ENCODE measurements at regions of chr1 and their contacts with region 1.

Region 1: GRCh38 chr1:39825432-39825951 is 36.8 kb upstream of the BMP8B start:
- ATAC-seq: no peak
- H3K4me3 ChIP-seq: no peak overlapping the region
- H3K27ac ChIP-seq: no peak overlapping the region
- H3K4me1 ChIP-seq: peaks cover 0 to 7% of the 10 kb centered on the region in 2 donors

Region 2: GRCh38 chr1:39898648-39899603 is 73.4 kb after region 1 on chr1:
- in situ Hi-C with region 1: loop called in 1 of 9 experiments (anchors 10 kb)
- ATAC-seq: peak in 6 of 8 experiments; percentile 3 to 71 (median 68)
- H3K4me3 ChIP-seq: peak overlapping the region; percentile 67 to 96 (median 77)
- H3K27ac ChIP-seq: peak overlapping the region; percentile 82 to 93
- H3K4me1 ChIP-seq: peaks cover 36 to 38% of the 10 kb centered on the region in 2 donors

Region 3: DNA sequence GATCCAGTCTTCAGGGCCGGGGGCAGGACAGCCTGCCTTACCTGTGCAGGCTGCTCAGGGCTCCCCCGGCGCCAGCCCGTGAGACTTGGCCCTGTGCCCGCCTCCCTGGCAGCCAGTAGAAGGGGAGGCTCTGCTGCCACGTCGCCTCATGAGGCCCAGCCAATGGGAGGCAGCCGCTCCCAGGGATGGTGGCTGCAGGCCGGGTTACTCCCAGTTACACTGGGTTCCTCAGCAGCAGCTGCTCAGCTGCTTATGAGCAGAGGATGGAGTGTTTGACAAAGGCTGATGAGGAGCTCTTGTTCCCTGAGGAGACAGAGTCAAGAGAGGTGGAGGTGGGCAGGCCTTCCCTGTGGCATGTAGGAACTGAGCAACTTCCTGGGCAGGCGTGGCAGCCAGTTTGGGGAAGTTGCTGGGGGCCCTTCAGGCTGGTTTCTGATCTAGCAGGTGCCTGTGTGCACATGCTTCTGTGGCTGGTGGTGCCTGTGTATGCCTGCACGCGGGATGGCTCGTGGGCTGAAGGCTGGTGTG is 135.0 kb after region 1 on chr1:
- in situ Hi-C with region 1: loop called in 3 of 9 experiments (anchors 10 to 25 kb)
- ATAC-seq: peak in 3 of 8 experiments; percentile 2 to 14 (median 13)
- H3K4me3 ChIP-seq: no peak overlapping the region
- H3K27ac ChIP-seq: no peak overlapping the region
- H3K4me1 ChIP-seq: peaks cover 4 to 6% of the 10 kb centered on the region in 2 donors

Region 4: GRCh38 chr1:40078512-40079333 is 253.2 kb after region 1 on chr1:
- in situ Hi-C with region 1: no loop called
- ATAC-seq: peak in 7 of 8 experiments; percentile 25 to 84 (median 45)
- H3K4me3 ChIP-seq: no peak overlapping the region
- H3K27ac ChIP-seq: no peak overlapping the region
- H3K4me1 ChIP-seq: no peaks in the 10 kb centered on the region